ENCODE measurements at regions of chr3 and their contacts with region 1.

Region 1: GRCh38 chr3:112519424-112520001 is 20.2 kb upstream of the BTLA start:
- DNase-seq: peak; percentile 55 to 70 (median 64)
- H3K4me3 ChIP-seq: no peak overlapping the region
- H3K4me3 Mint-ChIP-seq: no peak overlapping the region
- H3K27ac ChIP-seq: no peak overlapping the region
- H3K27ac Mint-ChIP-seq: no peak overlapping the region
- H3K4me1 ChIP-seq: peaks cover 14% of the 10 kb centered on the region
- H3K4me1 Mint-ChIP-seq: peaks cover 11 to 15% (median 14%) of the 10 kb centered on the region in 4 donors
- H3K27me3 ChIP-seq: no peaks in the 10 kb centered on the region
- H3K27me3 Mint-ChIP-seq: no peaks in the 10 kb centered on the region

Region 2: GRCh38 chr3:112293368-112294321 is 225.9 kb before region 1 on chr3 and contains the start of gene SLC9C1:
- CTCF ChIA-PET with region 1: interaction called, 31 read pairs
- POLR2A ChIA-PET with region 1: no interaction called
- intact Hi-C with region 1: loop called (anchors 1 kb)
- DNase-seq: peak in 4 of 5 donors; percentile 35 to 56 (median 38)
- H3K4me3 ChIP-seq: no peak within 1 kb of the TSS
- H3K4me3 Mint-ChIP-seq: peak within 1 kb of the TSS; percentile 9 to 76 (median 48)
- H3K27ac ChIP-seq: no peak within 1 kb of the TSS
- H3K27ac Mint-ChIP-seq: peak within 1 kb of the TSS in 1 of 7 donors; percentile 17
- H3K4me1 ChIP-seq: peaks cover 19% of the 10 kb centered on the region
- H3K4me1 Mint-ChIP-seq: peaks cover 15 to 28% (median 25%) of the 10 kb centered on the region in 4 donors
- H3K27me3 ChIP-seq: no peaks in the 10 kb centered on the region
- H3K27me3 Mint-ChIP-seq: peaks cover 0 to 2% of the 10 kb centered on the region in 2 donors
- total RNA-seq, gene SLC9C1: not detected

Region 3: GRCh38 chr3:112327371-112327951 is 192.1 kb before region 1 on chr3:
- CTCF ChIA-PET with region 1: interaction called, 17 read pairs
- POLR2A ChIA-PET with region 1: no interaction called
- intact Hi-C with region 1: loop called (anchors 1 kb)
- DNase-seq: peak; percentile 56 to 66 (median 60)
- H3K4me3 ChIP-seq: no peak overlapping the region
- H3K4me3 Mint-ChIP-seq: no peak overlapping the region
- H3K27ac ChIP-seq: no peak overlapping the region
- H3K27ac Mint-ChIP-seq: no peak overlapping the region
- H3K4me1 ChIP-seq: no peaks in the 10 kb centered on the region
- H3K4me1 Mint-ChIP-seq: peaks cover 0 to 7% (median under 1%) of the 10 kb centered on the region in 4 donors
- H3K27me3 ChIP-seq: no peaks in the 10 kb centered on the region
- H3K27me3 Mint-ChIP-seq: peaks cover 4 to 6% of the 10 kb centered on the region in 2 donors

Region 4: GRCh38 chr3:112437146-112438022 is 82.1 kb before region 1 on chr3:
- CTCF ChIA-PET with region 1: interaction called, 4 read pairs
- POLR2A ChIA-PET with region 1: no interaction called
- intact Hi-C with region 1: loop called (anchors 1 kb)
- DNase-seq: peak in 4 of 5 donors; percentile 24 to 39 (median 32)
- H3K4me3 ChIP-seq: no peak overlapping the region
- H3K4me3 Mint-ChIP-seq: peak overlapping the region in 7 of 8 donors; percentile 39 to 84 (median 63)
- H3K27ac ChIP-seq: no peak overlapping the region
- H3K27ac Mint-ChIP-seq: peak overlapping the region in 5 of 7 donors; percentile 16 to 45 (median 42)
- H3K4me1 ChIP-seq: peaks cover 9% of the 10 kb centered on the region
- H3K4me1 Mint-ChIP-seq: peaks cover 9 to 24% (median 19%) of the 10 kb centered on the region in 4 donors
- H3K27me3 ChIP-seq: no peaks in the 10 kb centered on the region
- H3K27me3 Mint-ChIP-seq: no peaks in the 10 kb centered on the region

Region 5: DNA sequence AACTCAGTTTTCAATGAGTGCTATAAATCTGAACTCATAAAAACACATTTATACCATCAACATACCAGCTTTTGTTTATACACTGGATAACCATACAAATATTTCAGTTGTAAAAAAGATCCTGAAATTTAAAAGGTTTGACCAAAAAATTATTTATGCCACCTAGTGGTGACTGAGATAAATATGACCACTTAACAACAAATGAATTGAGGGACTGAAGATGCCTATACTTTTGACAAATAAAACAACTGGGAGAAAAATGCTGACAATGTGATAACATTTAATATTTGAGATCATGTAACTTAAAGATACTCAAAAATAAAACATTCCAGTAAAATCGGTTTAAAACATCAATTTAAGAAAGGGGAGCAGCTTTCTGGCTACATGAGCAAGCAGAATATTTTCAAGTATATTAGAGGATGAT is 11.9 kb after region 1 on chr3:
- CTCF ChIA-PET with region 1: interaction called, 17 read pairs
- POLR2A ChIA-PET with region 1: no interaction called
- intact Hi-C with region 1: no loop called
- DNase-seq: peak in 4 of 5 donors; percentile 22 to 37 (median 30)
- H3K4me3 ChIP-seq: no peak overlapping the region
- H3K4me3 Mint-ChIP-seq: no peak overlapping the region
- H3K27ac ChIP-seq: no peak overlapping the region
- H3K27ac Mint-ChIP-seq: peak overlapping the region in 2 of 7 donors; percentile 5 to 12
- H3K4me1 ChIP-seq: no peaks in the 10 kb centered on the region
- H3K4me1 Mint-ChIP-seq: peaks cover 0 to 4% (median 2%) of the 10 kb centered on the region in 4 donors
- H3K27me3 ChIP-seq: no peaks in the 10 kb centered on the region
- H3K27me3 Mint-ChIP-seq: no peaks in the 10 kb centered on the region

Region 6: GRCh38 chr3:112629425-112629824 is 109.9 kb after region 1 on chr3:
- CTCF ChIA-PET with region 1: no interaction called
- POLR2A ChIA-PET with region 1: no interaction called
- intact Hi-C with region 1: no loop called
- DNase-seq: peak in 1 of 5 donors; percentile 45
- H3K4me3 ChIP-seq: no peak overlapping the region
- H3K4me3 Mint-ChIP-seq: no peak overlapping the region
- H3K27ac ChIP-seq: no peak overlapping the region
- H3K27ac Mint-ChIP-seq: no peak overlapping the region
- H3K4me1 ChIP-seq: no peaks in the 10 kb centered on the region
- H3K4me1 Mint-ChIP-seq: no peaks in the 10 kb centered on the region
- H3K27me3 ChIP-seq: no peaks in the 10 kb centered on the region
- H3K27me3 Mint-ChIP-seq: no peaks in the 10 kb centered on the region

Measured in CD4-positive, alpha-beta memory T cell (primary cell).